Naive thymus-derived CD4-positive, alpha-beta T cell (primary cell): ENCODE measurements at regions of chr3 and their contacts with region 1.

Region 1: GRCh38 chr3:53513556-53514190 is 19.3 kb downstream of the CACNA1D start:
- DNase-seq: no peak
- ATAC-seq: no peak
- H3K4me3 ChIP-seq: no peak overlapping the region
- H3K4me3 Mint-ChIP-seq: no peak overlapping the region
- H3K27ac ChIP-seq: no peak overlapping the region
- H3K27ac Mint-ChIP-seq: no peak overlapping the region
- H3K4me1 ChIP-seq: no peaks in the 10 kb centered on the region
- H3K4me1 Mint-ChIP-seq: peaks cover 0 to 3% (median 0%) of the 10 kb centered on the region in 7 donors
- H3K27me3 ChIP-seq: no peaks in the 10 kb centered on the region
- H3K27me3 Mint-ChIP-seq: peaks cover 17 to 31% (median 24%) of the 10 kb centered on the region in 5 donors

Region 2: DNA sequence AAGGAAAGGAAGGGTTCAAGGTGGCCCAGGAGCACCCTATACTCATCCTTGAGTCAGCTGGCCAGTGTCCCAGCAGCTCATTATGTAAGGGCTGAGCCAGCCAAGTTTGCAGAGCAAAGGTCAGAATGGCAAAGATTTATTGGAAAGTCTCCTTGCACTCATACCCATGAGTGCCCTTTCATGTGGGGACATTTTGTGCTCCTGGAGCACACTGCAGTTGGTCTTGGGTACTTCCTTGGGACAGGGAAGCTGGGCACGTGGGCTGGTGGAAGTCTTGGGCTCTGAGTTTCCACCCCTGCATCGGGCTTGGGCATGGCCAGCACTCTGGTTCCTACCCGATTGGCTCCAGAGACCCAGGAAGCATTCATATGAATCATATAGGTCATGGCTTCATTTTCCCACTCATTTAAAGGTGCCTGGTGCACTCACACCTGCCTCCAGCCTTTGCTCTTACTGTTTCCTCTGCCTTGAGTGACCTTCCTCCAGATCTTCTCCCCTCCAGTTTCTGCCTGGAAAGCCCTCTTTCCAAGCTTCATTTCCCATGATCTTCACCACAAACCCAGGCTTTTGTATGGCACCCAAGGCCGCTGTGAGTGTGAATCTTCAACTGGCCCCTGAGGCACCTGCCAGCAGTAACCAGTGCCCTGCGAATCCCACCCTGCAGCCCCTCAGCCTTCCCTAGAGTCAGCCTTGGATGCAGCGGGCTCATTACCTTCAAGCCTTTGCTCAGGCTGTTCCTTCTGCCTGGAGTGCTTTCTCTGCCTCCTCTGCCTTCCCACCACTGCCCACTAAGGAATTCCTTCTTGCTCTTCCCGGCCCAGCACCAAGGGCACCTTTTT is 363.2 kb before region 1 on chr3:
- CTCF ChIA-PET with region 1: no interaction called
- POLR2A ChIA-PET with region 1: no interaction called
- intact Hi-C with region 1: no loop called
- DNase-seq: no peak
- ATAC-seq: no peak
- H3K4me3 ChIP-seq: no peak overlapping the region
- H3K4me3 Mint-ChIP-seq: no peak overlapping the region
- H3K27ac ChIP-seq: no peak overlapping the region
- H3K27ac Mint-ChIP-seq: no peak overlapping the region
- H3K4me1 ChIP-seq: no peaks in the 10 kb centered on the region
- H3K4me1 Mint-ChIP-seq: peaks cover 0 to 2% (median 0%) of the 10 kb centered on the region in 7 donors
- H3K27me3 ChIP-seq: no peaks in the 10 kb centered on the region
- H3K27me3 Mint-ChIP-seq: peaks cover 12 to 19% (median 15%) of the 10 kb centered on the region in 5 donors

Region 3: DNA sequence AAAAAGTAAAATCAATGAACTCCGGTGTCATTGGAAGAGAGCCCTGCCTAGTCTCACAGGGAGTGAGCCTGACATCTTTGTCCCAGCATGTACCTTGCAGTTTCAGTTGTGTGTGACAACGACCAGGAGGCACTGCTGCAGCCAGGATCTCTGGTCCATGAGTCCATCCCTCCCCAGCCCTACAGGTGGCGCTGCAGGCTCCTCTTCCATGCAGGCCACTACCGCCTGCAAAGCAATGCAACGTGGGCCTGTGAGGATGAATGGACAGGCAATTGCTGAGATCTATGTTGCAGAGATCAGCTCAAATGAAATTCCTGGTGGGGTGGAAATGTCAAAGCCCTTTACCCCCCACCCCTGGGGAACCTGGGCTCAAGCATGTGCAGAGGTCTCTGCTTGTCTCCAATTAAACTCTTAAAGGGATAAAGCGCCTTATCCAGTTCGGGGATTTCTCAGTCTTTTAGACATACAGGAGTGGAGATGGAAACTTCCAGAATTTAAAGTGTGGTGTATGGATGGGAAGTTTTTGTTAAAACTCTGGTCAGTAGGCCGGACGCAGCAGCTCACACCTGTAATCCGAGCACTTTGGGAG is 293.7 kb before region 1 on chr3:
- CTCF ChIA-PET with region 1: no interaction called
- POLR2A ChIA-PET with region 1: no interaction called
- intact Hi-C with region 1: loop called in 1 of 2 experiments (anchors 2 kb)
- DNase-seq: peak; percentile 39 to 83 (median 66)
- ATAC-seq: peak; percentile 91
- H3K4me3 ChIP-seq: no peak overlapping the region
- H3K4me3 Mint-ChIP-seq: no peak overlapping the region
- H3K27ac ChIP-seq: no peak overlapping the region
- H3K27ac Mint-ChIP-seq: peak overlapping the region in 3 of 9 donors; percentile 7 to 19 (median 13)
- H3K4me1 ChIP-seq: no peaks in the 10 kb centered on the region
- H3K4me1 Mint-ChIP-seq: peaks cover 0 to 5% (median 3%) of the 10 kb centered on the region in 7 donors
- H3K27me3 ChIP-seq: no peaks in the 10 kb centered on the region
- H3K27me3 Mint-ChIP-seq: peaks cover 0 to 5% (median 0%) of the 10 kb centered on the region in 5 donors

Region 4: DNA sequence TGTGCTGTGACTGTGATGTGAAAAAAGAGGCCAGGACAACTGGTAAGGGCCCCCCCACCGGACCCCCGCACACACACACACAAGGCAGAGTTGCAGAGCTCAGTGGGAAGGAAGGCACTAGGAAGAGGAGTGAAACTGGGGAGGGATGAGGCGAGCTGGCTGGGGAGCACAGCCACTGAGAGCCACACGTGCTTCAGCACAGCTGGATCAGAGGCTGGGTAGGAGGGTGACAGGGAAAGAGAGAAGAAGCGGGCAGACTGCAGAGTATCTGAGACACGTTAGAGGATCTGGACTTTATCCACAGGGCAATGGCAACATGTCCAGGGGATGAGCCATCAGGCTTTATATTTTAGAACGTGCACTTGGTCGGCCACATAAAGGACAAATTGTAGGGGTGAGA is 219.8 kb before region 1 on chr3:
- CTCF ChIA-PET with region 1: interaction called, 3 read pairs
- POLR2A ChIA-PET with region 1: no interaction called
- intact Hi-C with region 1: loop called (anchors 1 to 10 kb)
- DNase-seq: no peak
- ATAC-seq: no peak
- H3K4me3 ChIP-seq: no peak overlapping the region
- H3K4me3 Mint-ChIP-seq: no peak overlapping the region
- H3K27ac ChIP-seq: no peak overlapping the region
- H3K27ac Mint-ChIP-seq: peak overlapping the region in 3 of 9 donors; percentile 0 to 76 (median 6)
- H3K4me1 ChIP-seq: no peaks in the 10 kb centered on the region
- H3K4me1 Mint-ChIP-seq: peaks cover 0 to 3% (median 0%) of the 10 kb centered on the region in 7 donors
- H3K27me3 ChIP-seq: no peaks in the 10 kb centered on the region
- H3K27me3 Mint-ChIP-seq: no peaks in the 10 kb centered on the region

Region 5: DNA sequence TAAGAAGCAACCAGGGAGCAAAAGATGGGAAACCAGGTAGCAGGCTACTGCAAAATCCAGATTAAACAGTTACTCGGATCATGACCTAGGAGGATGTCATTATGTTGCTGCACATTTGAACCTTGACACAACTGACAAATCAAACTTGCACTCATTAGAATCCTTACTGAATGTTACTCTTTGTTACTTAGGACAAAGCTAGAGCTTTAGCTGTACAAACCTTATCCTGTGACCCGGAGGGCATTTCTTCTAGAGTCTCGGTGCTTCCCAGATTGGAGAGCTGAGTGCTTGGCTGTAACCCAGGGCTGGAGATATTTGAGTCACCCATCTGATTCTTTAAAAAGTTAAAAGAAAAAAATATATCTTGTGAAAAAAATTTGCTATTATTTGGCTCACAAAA is 209.7 kb before region 1 on chr3:
- CTCF ChIA-PET with region 1: interaction called, 3 read pairs
- POLR2A ChIA-PET with region 1: no interaction called
- intact Hi-C with region 1: loop called (anchors 1 to 10 kb)
- DNase-seq: no peak
- ATAC-seq: no peak
- H3K4me3 ChIP-seq: no peak overlapping the region
- H3K4me3 Mint-ChIP-seq: no peak overlapping the region
- H3K27ac ChIP-seq: no peak overlapping the region
- H3K27ac Mint-ChIP-seq: peak overlapping the region in 3 of 9 donors; percentile 16 to 74 (median 27)
- H3K4me1 ChIP-seq: no peaks in the 10 kb centered on the region
- H3K4me1 Mint-ChIP-seq: peaks cover 0 to 5% (median 0%) of the 10 kb centered on the region in 7 donors
- H3K27me3 ChIP-seq: no peaks in the 10 kb centered on the region
- H3K27me3 Mint-ChIP-seq: no peaks in the 10 kb centered on the region

Region 6: GRCh38 chr3:53668872-53669271 is 155.2 kb after region 1 on chr3:
- CTCF ChIA-PET with region 1: no interaction called
- POLR2A ChIA-PET with region 1: no interaction called
- intact Hi-C with region 1: no loop called
- DNase-seq: no peak
- ATAC-seq: no peak
- H3K4me3 ChIP-seq: no peak overlapping the region
- H3K4me3 Mint-ChIP-seq: no peak overlapping the region
- H3K27ac ChIP-seq: no peak overlapping the region
- H3K27ac Mint-ChIP-seq: no peak overlapping the region
- H3K4me1 ChIP-seq: no peaks in the 10 kb centered on the region
- H3K4me1 Mint-ChIP-seq: no peaks in the 10 kb centered on the region
- H3K27me3 ChIP-seq: no peaks in the 10 kb centered on the region
- H3K27me3 Mint-ChIP-seq: peaks cover 12 to 50% (median 33%) of the 10 kb centered on the region in 5 donors

Region 7: GRCh38 chr3:53865732-53866499 is 352.2 kb after region 1 on chr3:
- CTCF ChIA-PET with region 1: no interaction called
- POLR2A ChIA-PET with region 1: no interaction called
- intact Hi-C with region 1: no loop called
- DNase-seq: no peak
- ATAC-seq: no peak
- H3K4me3 ChIP-seq: no peak overlapping the region
- H3K4me3 Mint-ChIP-seq: no peak overlapping the region
- H3K27ac ChIP-seq: no peak overlapping the region
- H3K27ac Mint-ChIP-seq: no peak overlapping the region
- H3K4me1 ChIP-seq: no peaks in the 10 kb centered on the region
- H3K4me1 Mint-ChIP-seq: peaks cover 0 to 8% (median 0%) of the 10 kb centered on the region in 7 donors
- H3K27me3 ChIP-seq: no peaks in the 10 kb centered on the region
- H3K27me3 Mint-ChIP-seq: no peaks in the 10 kb centered on the region